Activated naive CD8-positive, alpha-beta T cell treated with anti-CD3 and anti-CD28 coated beads, Interleukin-2, amount 10 ng/mL, durations not matched to agents 7 days and 5 days (primary cell): ENCODE measurements at regions of chr2 and their contacts with region 1.

Region 1: GRCh38 chr2:86440631-86441391 is at the start of gene KDM3A:
- DNase-seq: peak; percentile 98
- ATAC-seq: peak; percentile 84
- H3K4me3 Mint-ChIP-seq: peak within 1 kb of the TSS; percentile 94
- H3K27ac Mint-ChIP-seq: peak within 1 kb of the TSS; percentile 97
- H3K4me1 Mint-ChIP-seq: peaks cover 36% of the 10 kb centered on the region
- H3K27me3 Mint-ChIP-seq: no peaks in the 10 kb centered on the region
- total RNA-seq, gene KDM3A: 94.7 to 106 TPM

Region 2: DNA sequence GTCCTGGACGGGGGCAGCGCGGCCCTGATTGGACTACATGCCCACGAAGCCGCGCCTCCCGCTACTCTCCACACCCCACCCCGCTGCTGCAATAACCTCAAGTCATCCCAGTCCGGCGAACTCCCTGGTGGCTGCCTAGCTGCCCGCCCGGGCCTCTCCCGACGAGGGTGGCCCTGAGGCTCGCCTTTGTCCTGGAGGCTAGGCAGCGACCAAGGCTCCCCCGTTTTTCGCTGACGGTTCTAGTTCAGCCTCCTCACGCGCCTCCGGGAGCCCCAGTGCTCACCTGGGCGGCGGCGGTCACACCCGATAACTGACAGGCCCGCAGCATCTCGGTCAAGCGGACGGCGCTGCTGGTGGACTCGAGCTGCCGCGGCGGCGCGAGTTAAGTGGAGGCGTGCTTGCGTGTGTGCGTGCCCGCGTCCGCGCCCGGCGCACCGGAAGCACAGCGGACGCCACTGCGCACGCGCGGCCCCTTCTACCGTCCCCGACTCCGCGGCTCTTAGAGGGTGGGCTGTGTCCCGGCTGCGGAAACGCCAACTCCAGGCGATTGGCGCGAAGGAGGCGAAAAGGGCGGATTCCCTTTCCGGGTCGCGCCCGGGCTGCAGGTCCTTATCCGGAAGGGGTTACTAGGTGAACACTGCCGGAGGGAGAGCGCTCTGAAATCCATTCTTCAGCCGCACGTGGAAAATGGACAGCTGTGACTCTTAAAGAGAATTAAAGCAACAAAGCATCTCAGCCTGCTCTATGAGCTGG is 245.6 kb before region 1 on chr2 and contains the start of gene IMMT:
- POLR2A ChIA-PET with region 1: interaction called, 17 read pairs
- DNase-seq: peak; percentile 96
- ATAC-seq: peak; percentile 93
- H3K4me3 Mint-ChIP-seq: peak within 1 kb of the TSS; percentile 96
- H3K27ac Mint-ChIP-seq: peak within 1 kb of the TSS; percentile 82
- H3K4me1 Mint-ChIP-seq: peaks cover 35% of the 10 kb centered on the region
- H3K27me3 Mint-ChIP-seq: no peaks in the 10 kb centered on the region
- total RNA-seq, gene IMMT: 121 to 122 TPM

Region 3: GRCh38 chr2:86372641-86373503 is 67.9 kb before region 1 on chr2:
- POLR2A ChIA-PET with region 1: interaction called, 17 read pairs
- DNase-seq: no peak
- ATAC-seq: no peak
- H3K4me3 Mint-ChIP-seq: no peak overlapping the region
- H3K27ac Mint-ChIP-seq: no peak overlapping the region
- H3K4me1 Mint-ChIP-seq: peaks cover 18% of the 10 kb centered on the region
- H3K27me3 Mint-ChIP-seq: peaks cover 5% of the 10 kb centered on the region

Region 4: GRCh38 chr2:86468162-86469033 is 27.6 kb after region 1 on chr2:
- POLR2A ChIA-PET with region 1: interaction called, 14 read pairs
- DNase-seq: no peak
- ATAC-seq: peak; percentile 67
- H3K4me3 Mint-ChIP-seq: peak overlapping the region; percentile 34
- H3K27ac Mint-ChIP-seq: peak overlapping the region; percentile 81
- H3K4me1 Mint-ChIP-seq: peaks cover 15% of the 10 kb centered on the region
- H3K27me3 Mint-ChIP-seq: no peaks in the 10 kb centered on the region

Region 5: GRCh38 chr2:86623651-86624541 is 183.1 kb after region 1 on chr2 and contains the start of gene RNF103:
- POLR2A ChIA-PET with region 1: interaction called, 14 read pairs
- DNase-seq: peak; percentile 95
- ATAC-seq: peak; percentile 82
- H3K4me3 Mint-ChIP-seq: peak within 1 kb of the TSS; percentile 93
- H3K27ac Mint-ChIP-seq: peak within 1 kb of the TSS; percentile 98
- H3K4me1 Mint-ChIP-seq: peaks cover 26% of the 10 kb centered on the region
- H3K27me3 Mint-ChIP-seq: peaks cover 13% of the 10 kb centered on the region
- total RNA-seq, gene RNF103: 20.1 to 20.9 TPM

Region 6: GRCh38 chr2:86790676-86791572 is 350.1 kb after region 1 on chr2 and contains the start of gene CD8A:
- POLR2A ChIA-PET with region 1: interaction called, 15 read pairs
- DNase-seq: peak; percentile 86
- ATAC-seq: peak; percentile 34
- H3K4me3 Mint-ChIP-seq: peak within 1 kb of the TSS; percentile 93
- H3K27ac Mint-ChIP-seq: peak within 1 kb of the TSS; percentile 99
- H3K4me1 Mint-ChIP-seq: peaks cover 55% of the 10 kb centered on the region
- H3K27me3 Mint-ChIP-seq: no peaks in the 10 kb centered on the region
- total RNA-seq, gene CD8A: 666 to 683 TPM